ENCODE measurements at regions of chr3 and their contacts with region 1.

Region 1: DNA sequence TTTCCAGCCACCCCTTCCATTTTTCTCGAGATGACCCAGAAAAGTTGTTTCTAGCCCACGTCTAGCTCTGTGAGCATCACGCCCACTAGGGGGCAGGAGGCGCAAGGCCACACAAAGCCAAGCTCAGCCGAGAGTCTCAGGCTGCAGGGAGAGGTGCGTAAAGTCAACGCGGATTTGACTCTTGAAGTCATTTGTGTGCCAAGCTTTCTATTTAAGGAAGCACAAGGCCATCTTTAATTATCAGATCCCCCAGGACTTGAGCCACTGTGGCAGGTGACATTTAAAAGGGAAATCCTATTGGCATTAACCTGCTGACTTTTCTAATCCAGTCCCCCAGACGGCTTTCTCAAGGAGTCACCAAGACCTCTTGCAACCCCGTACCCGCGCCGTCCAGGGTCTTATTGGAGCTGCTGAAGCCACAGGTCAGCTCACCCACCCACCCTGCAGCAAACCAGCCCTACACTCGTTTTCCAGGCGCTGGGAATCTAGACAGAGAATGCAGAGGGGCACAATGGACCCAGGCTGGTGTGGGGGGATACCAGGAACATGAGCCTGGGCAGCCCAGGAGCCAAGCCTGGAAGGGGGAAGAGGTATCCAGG is 62.1 kb downstream of the CAPN7 start:
- DNase-seq: peak; percentile 93
- ATAC-seq: peak; percentile 63
- H3K4me3 Mint-ChIP-seq: no peak overlapping the region
- H3K27ac Mint-ChIP-seq: no peak overlapping the region
- H3K4me1 Mint-ChIP-seq: peaks cover 44% of the 10 kb centered on the region
- H3K27me3 Mint-ChIP-seq: peaks cover 7% of the 10 kb centered on the region
- CTCF ChIP-seq: peak; percentile 83

Region 2: GRCh38 chr3:15256861-15257341 is 11.2 kb before region 1 on chr3:
- CTCF ChIA-PET with region 1: interaction called, 39 read pairs
- POLR2A ChIA-PET with region 1: interaction called, 3 read pairs
- intact Hi-C with region 1: no loop called
- DNase-seq: no peak
- ATAC-seq: no peak
- H3K4me3 Mint-ChIP-seq: no peak overlapping the region
- H3K27ac Mint-ChIP-seq: peak overlapping the region; percentile 21
- H3K4me1 Mint-ChIP-seq: peaks cover 6% of the 10 kb centered on the region
- H3K27me3 Mint-ChIP-seq: no peaks in the 10 kb centered on the region
- CTCF ChIP-seq: no peak

Region 3: GRCh38 chr3:15309662-15310335 is 41.7 kb after region 1 on chr3:
- CTCF ChIA-PET with region 1: interaction called, 17 read pairs
- POLR2A ChIA-PET with region 1: interaction called, 4 read pairs
- intact Hi-C with region 1: loop called (anchors 5 kb)
- DNase-seq: peak; percentile 41
- ATAC-seq: peak; percentile 25
- H3K4me3 Mint-ChIP-seq: no peak overlapping the region
- H3K27ac Mint-ChIP-seq: peak overlapping the region; percentile 75
- H3K4me1 Mint-ChIP-seq: peaks cover 46% of the 10 kb centered on the region
- H3K27me3 Mint-ChIP-seq: no peaks in the 10 kb centered on the region
- CTCF ChIP-seq: no peak

Region 4: GRCh38 chr3:15332405-15333098 is 64.4 kb after region 1 on chr3 and contains the start of gene SH3BP5:
- CTCF ChIA-PET with region 1: interaction called, 122 read pairs
- POLR2A ChIA-PET with region 1: interaction called, 8 read pairs
- intact Hi-C with region 1: loop called (anchors 5 kb)
- DNase-seq: peak; percentile 73
- ATAC-seq: peak; percentile 90
- H3K4me3 Mint-ChIP-seq: peak within 1 kb of the TSS; percentile 76
- H3K27ac Mint-ChIP-seq: peak within 1 kb of the TSS; percentile 70
- H3K4me1 Mint-ChIP-seq: peaks cover 44% of the 10 kb centered on the region
- H3K27me3 Mint-ChIP-seq: peaks cover 6% of the 10 kb centered on the region
- CTCF ChIP-seq: peak; percentile 79
- total RNA-seq, gene SH3BP5: 2.0 to 2.4 TPM

Region 5: GRCh38 chr3:15367059-15367458 is 98.9 kb after region 1 on chr3:
- CTCF ChIA-PET with region 1: interaction called, 14 read pairs
- POLR2A ChIA-PET with region 1: interaction called, 5 read pairs
- intact Hi-C with region 1: loop called (anchors 5 kb)
- DNase-seq: no peak
- ATAC-seq: peak; percentile 29
- H3K4me3 Mint-ChIP-seq: no peak overlapping the region
- H3K27ac Mint-ChIP-seq: no peak overlapping the region
- H3K4me1 Mint-ChIP-seq: peaks cover 14% of the 10 kb centered on the region
- H3K27me3 Mint-ChIP-seq: peaks cover 6% of the 10 kb centered on the region
- CTCF ChIP-seq: no peak

Region 6: GRCh38 chr3:15399970-15400369 is 131.8 kb after region 1 on chr3:
- CTCF ChIA-PET with region 1: interaction called, 117 read pairs
- POLR2A ChIA-PET with region 1: interaction called, 5 read pairs
- intact Hi-C with region 1: loop called (anchors 2 kb)
- DNase-seq: peak; percentile 37
- ATAC-seq: peak; percentile 75
- H3K4me3 Mint-ChIP-seq: no peak overlapping the region
- H3K27ac Mint-ChIP-seq: no peak overlapping the region
- H3K4me1 Mint-ChIP-seq: peaks cover 15% of the 10 kb centered on the region
- H3K27me3 Mint-ChIP-seq: no peaks in the 10 kb centered on the region
- CTCF ChIP-seq: no peak

Region 7: GRCh38 chr3:15557511-15557946 is 289.4 kb after region 1 on chr3:
- CTCF ChIA-PET with region 1: interaction called, 17 read pairs
- POLR2A ChIA-PET with region 1: interaction called, 3 read pairs
- intact Hi-C with region 1: loop called (anchors 5 kb)
- DNase-seq: peak; percentile 82
- ATAC-seq: peak; percentile 98
- H3K4me3 Mint-ChIP-seq: no peak overlapping the region
- H3K27ac Mint-ChIP-seq: peak overlapping the region; percentile 68
- H3K4me1 Mint-ChIP-seq: peaks cover 17% of the 10 kb centered on the region
- H3K27me3 Mint-ChIP-seq: no peaks in the 10 kb centered on the region
- CTCF ChIP-seq: peak; percentile 85

Region 8: GRCh38 chr3:15964605-15965442 is 696.7 kb after region 1 on chr3:
- CTCF ChIA-PET with region 1: no interaction called
- POLR2A ChIA-PET with region 1: no interaction called
- intact Hi-C with region 1: no loop called
- DNase-seq: no peak
- ATAC-seq: no peak
- H3K4me3 Mint-ChIP-seq: no peak overlapping the region
- H3K27ac Mint-ChIP-seq: no peak overlapping the region
- H3K4me1 Mint-ChIP-seq: no peaks in the 10 kb centered on the region
- H3K27me3 Mint-ChIP-seq: no peaks in the 10 kb centered on the region
- CTCF ChIP-seq: no peak

Measured in activated CD8-positive, alpha-beta T cell treated with anti-CD3 and anti-CD28 coated beads for 36 hours (primary cell).